ENCODE measurements at regions of chr1 and their contacts with region 1.

Region 1: GRCh38 chr1:182029379-182030331 is 31.9 kb downstream of the ZNF648 start:
- DNase-seq: peak; percentile 96 to 97 (median 96)
- ATAC-seq: peak; percentile 99
- H3K4me3 ChIP-seq: peak overlapping the region; percentile 35 to 80 (median 68)
- H3K27ac ChIP-seq: peak overlapping the region; percentile 48 to 89 (median 78)
- H3K4me1 ChIP-seq: peaks cover 0 to 14% (median 5%) of the 10 kb centered on the region in 12 donors
- H3K27me3 ChIP-seq: no peaks in the 10 kb centered on the region
- CTCF ChIP-seq: peak; percentile 51 to 79 (median 61)
- POLR2A ChIP-seq: peak in 1 of 2 donors; percentile 71

Region 2: DNA sequence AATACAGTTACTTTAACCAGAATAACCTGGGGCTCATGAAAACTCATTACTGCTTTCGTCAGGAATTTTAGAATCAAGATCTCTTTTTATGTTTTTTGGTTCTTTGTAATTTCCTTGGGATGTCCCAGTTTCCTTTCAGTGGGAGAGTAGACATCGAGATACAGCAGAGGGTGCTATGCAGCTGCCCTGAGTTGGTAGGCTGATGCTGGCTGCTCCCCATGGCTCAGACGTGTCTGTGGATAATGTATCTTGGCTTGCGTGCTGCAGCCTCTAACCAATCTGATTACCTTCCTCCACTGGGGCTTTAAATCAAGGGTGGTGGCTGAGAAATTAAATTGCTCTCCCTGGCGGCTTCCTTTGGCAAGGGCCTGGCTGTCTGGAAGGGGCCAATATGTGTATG is 292.6 kb before region 1 on chr1:
- intact Hi-C with region 1: loop called in 1 of 10 experiments (anchors 10 kb)
- DNase-seq: no peak
- ATAC-seq: no peak
- H3K4me3 ChIP-seq: no peak overlapping the region
- H3K27ac ChIP-seq: no peak overlapping the region
- H3K4me1 ChIP-seq: no peaks in the 10 kb centered on the region
- H3K27me3 ChIP-seq: peaks cover 0 to 20% (median 0%) of the 10 kb centered on the region in 9 donors
- CTCF ChIP-seq: peak in 1 of 12 donors; percentile 31
- POLR2A ChIP-seq: no peak

Region 3: GRCh38 chr1:181857857-181858547 is 171.7 kb before region 1 on chr1:
- intact Hi-C with region 1: no loop called
- DNase-seq: no peak
- ATAC-seq: no peak
- H3K4me3 ChIP-seq: no peak overlapping the region
- H3K27ac ChIP-seq: no peak overlapping the region
- H3K4me1 ChIP-seq: no peaks in the 10 kb centered on the region
- H3K27me3 ChIP-seq: no peaks in the 10 kb centered on the region
- CTCF ChIP-seq: no peak
- POLR2A ChIP-seq: no peak

Region 4: GRCh38 chr1:182003953-182004586 is 25.6 kb before region 1 on chr1:
- intact Hi-C with region 1: loop called in 1 of 10 experiments (anchors 2 kb)
- DNase-seq: peak in 4 of 5 donors; percentile 54 to 74 (median 64)
- ATAC-seq: peak; percentile 62 to 87 (median 80)
- H3K4me3 ChIP-seq: no peak overlapping the region
- H3K27ac ChIP-seq: peak overlapping the region in 11 of 12 donors; percentile 1 to 85 (median 71)
- H3K4me1 ChIP-seq: peaks cover 0 to 22% (median 9%) of the 10 kb centered on the region in 12 donors
- H3K27me3 ChIP-seq: no peaks in the 10 kb centered on the region
- CTCF ChIP-seq: no peak
- POLR2A ChIP-seq: no peak